PC-9 (cell line): ENCODE measurements at regions of chr3 and their contacts with region 1.

Region 1: DNA sequence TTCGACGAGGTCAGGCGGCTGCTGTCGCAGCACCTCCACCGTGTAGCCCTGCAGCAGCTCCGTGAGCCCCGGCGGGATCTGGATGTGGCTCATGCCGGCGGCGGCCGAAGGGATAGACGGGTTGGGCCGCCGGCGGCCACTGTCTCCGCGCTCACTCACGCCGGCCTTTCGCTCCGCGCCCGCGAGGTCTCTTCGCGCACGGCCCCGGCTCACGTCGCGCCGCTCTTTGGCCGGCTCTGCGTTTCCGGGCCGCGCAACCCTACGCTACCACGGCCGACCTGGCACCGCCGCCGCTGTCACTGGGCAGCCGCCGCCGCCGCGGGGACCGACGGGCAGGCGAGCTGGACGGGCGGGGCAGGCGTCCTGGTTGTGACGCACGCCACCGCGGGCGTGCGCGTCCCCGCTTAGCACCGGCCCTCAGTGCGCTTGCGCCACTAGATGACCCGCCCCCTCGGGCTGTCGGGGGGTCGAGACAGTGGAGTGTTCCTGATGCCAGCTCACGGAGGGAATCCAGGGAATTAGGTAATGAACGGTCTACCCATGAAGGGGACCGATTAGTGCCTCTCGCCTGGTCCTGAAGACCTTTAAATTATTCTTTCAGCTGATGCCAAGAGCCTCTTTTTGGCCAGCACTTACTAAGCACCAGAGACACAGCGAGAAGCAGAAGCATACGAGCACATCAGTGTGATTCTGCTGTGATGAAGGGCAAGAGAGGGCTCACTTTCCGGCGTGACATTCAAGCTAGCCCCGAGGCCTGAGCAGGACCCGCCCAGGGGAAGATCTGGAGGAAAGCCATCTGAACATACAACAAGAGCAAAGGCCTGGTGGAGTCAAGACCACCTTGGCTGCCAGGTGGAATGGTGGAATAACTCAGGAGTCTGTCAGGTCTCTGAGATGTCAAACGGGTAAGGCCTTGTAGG is at the start of gene PRKAR2A:
- DNase-seq: peak; percentile 66 to 90
- H3K4me3 ChIP-seq: peak within 1 kb of the TSS; percentile 85
- H3K27ac ChIP-seq: peak within 1 kb of the TSS; percentile 54
- H3K4me1 ChIP-seq: peaks cover 12% of the 10 kb centered on the region
- H3K27me3 ChIP-seq: no peaks in the 10 kb centered on the region
- CTCF ChIP-seq: no peak
- total RNA-seq, gene PRKAR2A: 54.2 and 78.9 TPM in 2 replicates

Region 2: DNA sequence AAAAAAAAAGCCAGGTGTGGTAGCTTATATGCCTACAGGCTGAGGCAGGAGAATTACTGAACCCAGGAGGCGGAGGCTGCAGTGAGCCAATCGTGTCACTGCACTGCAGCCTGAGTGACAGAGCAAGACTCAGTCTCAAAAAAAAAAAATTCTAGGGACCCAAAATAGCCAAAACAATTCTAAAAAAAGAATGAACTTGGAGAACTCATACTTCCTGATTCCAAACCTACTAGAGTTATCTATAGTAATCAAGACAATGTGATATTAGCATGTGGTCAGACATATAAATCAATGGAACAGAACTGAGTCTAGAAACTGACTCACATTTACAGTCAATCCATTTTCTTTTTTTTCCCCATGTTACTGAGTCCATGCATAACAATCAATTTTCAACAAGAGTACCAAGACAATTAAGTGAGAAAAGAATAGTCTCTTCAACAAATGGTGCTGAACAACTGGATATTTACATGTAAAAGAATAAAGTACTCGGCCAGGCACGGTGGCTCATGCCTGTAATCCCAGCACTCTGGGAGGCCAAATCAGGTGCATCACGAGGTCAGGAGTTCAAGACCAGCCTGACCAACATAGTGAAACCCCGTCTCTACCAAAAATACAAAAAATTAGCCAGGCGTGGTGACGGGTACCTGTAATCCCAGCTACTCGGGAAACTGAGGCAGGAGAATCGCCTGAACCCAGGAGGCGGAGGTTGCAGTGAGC is 12.0 kb before region 1 on chr3:
- CTCF ChIA-PET with region 1: no interaction called
- POLR2A ChIA-PET with region 1: interaction called, 22 read pairs
- intact Hi-C with region 1: no loop called
- DNase-seq: no peak
- H3K4me3 ChIP-seq: no peak overlapping the region
- H3K27ac ChIP-seq: no peak overlapping the region
- H3K4me1 ChIP-seq: no peaks in the 10 kb centered on the region
- H3K27me3 ChIP-seq: no peaks in the 10 kb centered on the region
- CTCF ChIP-seq: no peak

Region 3: GRCh38 chr3:48898383-48899234 is 50.8 kb after region 1 on chr3 and contains the start of gene SLC25A20:
- CTCF ChIA-PET with region 1: no interaction called
- POLR2A ChIA-PET with region 1: no interaction called
- intact Hi-C with region 1: loop called (anchors 2 kb)
- DNase-seq: peak; percentile 71 to 92
- H3K4me3 ChIP-seq: peak within 1 kb of the TSS; percentile 60
- H3K27ac ChIP-seq: peak within 1 kb of the TSS; percentile 27; the same call in 1 of the 2 replicates
- H3K4me1 ChIP-seq: peaks cover 26% of the 10 kb centered on the region
- H3K27me3 ChIP-seq: no peaks in the 10 kb centered on the region
- CTCF ChIP-seq: no peak
- total RNA-seq, gene SLC25A20: 2.9 and 4.9 TPM in 2 replicates

Region 4: GRCh38 chr3:48926425-48927392 is 78.9 kb after region 1 on chr3:
- CTCF ChIA-PET with region 1: no interaction called
- POLR2A ChIA-PET with region 1: no interaction called
- intact Hi-C with region 1: no loop called
- DNase-seq: peak in 1 of 2 experiments; percentile 61
- H3K4me3 ChIP-seq: no peak overlapping the region
- H3K27ac ChIP-seq: no peak overlapping the region
- H3K4me1 ChIP-seq: peaks cover 16% of the 10 kb centered on the region
- H3K27me3 ChIP-seq: no peaks in the 10 kb centered on the region
- CTCF ChIP-seq: no peak

Region 5: GRCh38 chr3:49422379-49423248 is 574.9 kb after region 1 on chr3 and contains the start of gene AMT:
- CTCF ChIA-PET with region 1: no interaction called
- POLR2A ChIA-PET with region 1: no interaction called
- intact Hi-C with region 1: no loop called
- DNase-seq: no peak
- H3K4me3 ChIP-seq: no peak within 1 kb of the TSS
- H3K27ac ChIP-seq: peak within 1 kb of the TSS; percentile 75; the same call in 1 of the 2 replicates
- H3K4me1 ChIP-seq: peaks cover 35% of the 10 kb centered on the region
- H3K27me3 ChIP-seq: no peaks in the 10 kb centered on the region
- CTCF ChIP-seq: no peak
- total RNA-seq, gene AMT: 12.9 and 17.6 TPM in 2 replicates